Breast epithelium (tissue), 4 donors: ENCODE measurements at regions of chr3 and their contacts with region 1.

Region 1: DNA sequence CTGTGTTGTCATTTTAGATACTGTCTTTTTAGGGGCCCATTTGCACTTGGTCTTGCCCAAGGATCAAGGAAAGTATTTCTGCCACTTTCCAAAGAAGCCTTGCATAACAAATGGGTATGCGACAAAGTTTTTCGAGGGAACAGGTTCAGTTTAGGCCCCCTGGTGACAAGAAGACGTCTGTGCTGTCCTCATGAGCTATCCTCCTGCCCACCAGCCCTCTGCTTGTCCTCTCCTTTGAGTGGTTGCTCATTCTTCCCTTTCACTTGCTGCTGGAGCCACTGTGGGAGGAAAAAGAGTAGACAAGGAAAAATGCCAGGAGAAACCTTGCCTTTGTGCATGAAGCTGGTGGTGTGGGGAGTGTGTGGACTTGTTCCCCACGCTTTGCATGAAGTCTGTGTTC is 171.9 kb downstream of the CACNA2D3 start:
- DNase-seq: no peak
- H3K4me3 ChIP-seq: no peak overlapping the region
- H3K27ac ChIP-seq: no peak overlapping the region
- H3K4me1 ChIP-seq: no peaks in the 10 kb centered on the region
- H3K27me3 ChIP-seq: no peaks in the 10 kb centered on the region
- CTCF ChIP-seq: no peak
- POLR2A ChIP-seq: no peak

Region 2: DNA sequence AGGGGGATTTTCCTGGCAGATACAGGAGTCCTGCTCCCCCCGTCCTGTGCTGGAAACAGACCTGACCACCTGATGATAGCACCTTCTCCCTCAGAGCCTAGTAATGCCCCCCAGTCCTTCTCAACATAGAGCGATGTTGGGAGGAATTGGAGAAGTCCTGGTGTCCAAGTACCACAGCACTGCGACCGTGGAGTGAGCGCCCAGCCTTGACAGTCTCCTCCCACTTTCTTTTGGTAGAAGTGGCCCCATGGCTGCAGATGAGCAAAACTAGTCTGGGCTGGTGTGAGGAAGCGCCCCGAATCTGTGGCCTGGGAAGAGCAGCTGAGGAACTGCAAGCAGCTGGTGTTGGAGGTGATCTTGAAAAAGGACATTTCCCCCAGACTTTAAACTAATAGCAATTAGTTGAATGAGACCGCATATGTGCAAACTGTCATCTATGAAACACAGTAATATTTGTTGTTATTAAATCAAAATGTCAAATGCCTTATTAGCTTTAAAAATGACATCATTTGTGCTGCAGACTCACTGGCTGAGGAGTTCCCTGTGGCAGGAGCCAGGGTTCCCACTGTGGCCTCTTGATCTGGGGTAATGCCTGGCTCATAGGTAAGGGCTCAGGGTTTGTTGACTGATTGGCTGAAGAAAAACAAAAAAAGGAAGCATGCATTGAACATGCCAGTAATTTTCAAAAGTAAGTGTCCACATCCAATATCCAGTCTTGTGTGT is 50.1 kb before region 1 on chr3:
- intact Hi-C with region 1: loop called (anchors 2 kb)
- DNase-seq: no peak
- H3K4me3 ChIP-seq: peak overlapping the region in 1 of 3 donors; percentile 58
- H3K27ac ChIP-seq: no peak overlapping the region
- H3K4me1 ChIP-seq: no peaks in the 10 kb centered on the region
- H3K27me3 ChIP-seq: no peaks in the 10 kb centered on the region
- CTCF ChIP-seq: no peak
- POLR2A ChIP-seq: no peak